ENCODE measurements at regions of chr4 and their contacts with region 1.

Region 1: DNA sequence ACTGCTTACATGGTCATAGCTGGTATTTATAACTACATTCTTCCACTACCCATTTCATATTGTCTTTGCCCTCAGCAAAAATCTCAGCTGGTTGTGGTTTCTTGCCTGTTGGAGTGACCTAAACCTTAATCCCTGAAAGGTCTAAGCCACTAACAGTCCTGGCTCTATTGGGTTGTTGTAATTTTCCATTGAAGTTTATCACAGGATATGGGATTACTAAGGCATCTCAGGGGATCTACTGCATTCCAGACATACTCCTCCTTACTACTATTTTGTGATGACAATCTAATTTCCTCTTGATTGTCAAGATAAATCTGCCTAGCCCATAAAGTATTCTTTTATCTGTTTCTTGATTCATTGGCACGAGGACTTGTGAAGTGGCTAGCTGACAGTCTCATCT is 6.2 kb upstream of the OSTC start:
- DNase-seq: peak; percentile 87
- H3K4me3 ChIP-seq: no peak overlapping the region
- H3K27ac ChIP-seq: peak overlapping the region; percentile 41
- H3K4me1 ChIP-seq: peaks cover 7% of the 10 kb centered on the region
- H3K27me3 ChIP-seq: no peaks in the 10 kb centered on the region
- CTCF ChIP-seq: no peak

Region 2: GRCh38 chr4:108662629-108663028 is 18.4 kb after region 1 on chr4:
- CTCF ChIA-PET with region 1: no interaction called
- POLR2A ChIA-PET with region 1: interaction called, 12 read pairs
- intact Hi-C with region 1: no loop called
- DNase-seq: no peak
- H3K4me3 ChIP-seq: no peak overlapping the region
- H3K27ac ChIP-seq: peak overlapping the region; percentile 14
- H3K4me1 ChIP-seq: no peaks in the 10 kb centered on the region
- H3K27me3 ChIP-seq: no peaks in the 10 kb centered on the region
- CTCF ChIP-seq: no peak